Vagina (tissue), 2 donors: ENCODE measurements at regions of chrX and their contacts with region 1.

Region 1: GRCh38 chrX:101415180-101416145 is 7.4 kb downstream of the HNRNPH2 start:
- DNase-seq: no peak
- H3K4me3 ChIP-seq: no peak overlapping the region
- H3K27ac ChIP-seq: peak overlapping the region; percentile 92
- H3K4me1 ChIP-seq: peaks cover 20% of the 10 kb centered on the region
- H3K27me3 ChIP-seq: no peaks in the 10 kb centered on the region
- CTCF ChIP-seq: peak; percentile 56 to 73 (median 59)
- POLR2A ChIP-seq: no peak

Region 2: DNA sequence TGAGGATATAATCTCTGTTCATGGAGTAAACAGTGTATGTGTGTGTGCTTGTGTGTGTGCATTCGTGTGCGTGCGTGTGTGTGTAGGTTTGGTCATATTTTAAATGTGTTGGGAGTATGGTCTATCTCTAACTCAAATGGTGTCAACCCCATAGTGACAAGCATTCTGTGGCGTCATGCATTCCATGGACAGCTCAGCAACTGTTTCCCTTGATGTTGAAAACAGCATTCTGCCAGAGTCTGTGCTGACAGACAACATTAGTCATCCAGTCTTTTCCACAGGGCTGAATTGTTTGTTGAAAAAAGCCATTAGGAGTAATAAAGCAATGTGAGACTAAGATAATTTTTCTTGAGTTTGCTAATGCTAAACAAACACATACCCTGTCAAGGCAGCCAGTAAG is 1712.0 kb before region 1 on chrX:
- intact Hi-C with region 1: no loop called
- DNase-seq: no peak
- H3K4me3 ChIP-seq: no peak overlapping the region
- H3K27ac ChIP-seq: no peak overlapping the region
- H3K4me1 ChIP-seq: no peaks in the 10 kb centered on the region
- H3K27me3 ChIP-seq: no peaks in the 10 kb centered on the region
- CTCF ChIP-seq: no peak
- POLR2A ChIP-seq: no peak

Region 3: DNA sequence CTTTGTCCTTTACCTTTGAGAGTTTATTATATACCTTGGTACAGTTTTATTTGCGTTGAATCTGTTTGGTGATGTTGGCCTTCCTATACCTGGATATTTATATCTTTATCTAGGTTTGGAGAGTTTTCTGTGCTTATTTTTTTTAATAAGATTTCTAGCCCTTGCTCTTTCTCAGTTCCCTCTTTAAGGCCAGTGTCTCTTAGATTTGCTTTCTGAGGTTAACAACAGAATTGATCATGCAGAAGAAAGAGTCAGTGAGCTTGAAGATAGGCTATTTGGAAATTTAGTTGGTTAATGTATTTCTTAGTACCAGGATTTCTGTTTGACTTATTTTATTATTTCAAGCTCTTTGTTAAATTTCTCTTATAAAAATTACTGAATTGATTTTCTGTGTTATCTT is 111.7 kb before region 1 on chrX:
- intact Hi-C with region 1: no loop called
- DNase-seq: no peak
- H3K4me3 ChIP-seq: no peak overlapping the region
- H3K27ac ChIP-seq: no peak overlapping the region
- H3K4me1 ChIP-seq: no peaks in the 10 kb centered on the region
- H3K27me3 ChIP-seq: no peaks in the 10 kb centered on the region
- CTCF ChIP-seq: no peak
- POLR2A ChIP-seq: no peak

Region 4: GRCh38 chrX:101550362-101550750 is 134.9 kb after region 1 on chrX and contains the start of gene ARMCX1:
- intact Hi-C with region 1: loop called (anchors 10 kb)
- DNase-seq: peak in 1 of 2 donors; percentile 86
- H3K4me3 ChIP-seq: peak within 1 kb of the TSS; percentile 51 to 52
- H3K27ac ChIP-seq: peak within 1 kb of the TSS; percentile 81
- H3K4me1 ChIP-seq: no peaks in the 10 kb centered on the region
- H3K27me3 ChIP-seq: no peaks in the 10 kb centered on the region
- CTCF ChIP-seq: no peak
- POLR2A ChIP-seq: peak in 1 of 2 donors; percentile 71
- total RNA-seq, gene ARMCX1: 28.5 TPM